ENCODE measurements at regions of chr20 and their contacts with region 1.

Region 1: GRCh38 chr20:24917797-24918578 is 31.1 kb upstream of the CST7 start:
- DNase-seq: peak; percentile 53
- ATAC-seq: peak; percentile 94
- H3K4me3 ChIP-seq: no peak overlapping the region
- H3K27ac ChIP-seq: no peak overlapping the region
- H3K4me1 ChIP-seq: peaks cover 15% of the 10 kb centered on the region; the same call in 1 of the 2 replicates
- H3K27me3 ChIP-seq: peaks cover 6 to 35% of the 10 kb centered on the region in 2 experiments; a peak in 4 of 5 replicates
- CTCF ChIP-seq: peak; percentile 96
- EP300 ChIP-seq: no peak
- POLR2A ChIP-seq: no peak
- RAD21 ChIP-seq: peak; percentile 95

Region 2: GRCh38 chr20:23937303-23938117 is 980.5 kb before region 1 on chr20:
- CTCF ChIA-PET with region 1: interaction called, 5 read pairs
- POLR2A ChIA-PET with region 1: no interaction called
- in situ Hi-C with region 1: loop called (anchors 25 kb)
- intact Hi-C with region 1: no loop called
- DNase-seq: peak; percentile 52
- ATAC-seq: peak; percentile 100
- H3K4me3 ChIP-seq: no peak overlapping the region
- H3K27ac ChIP-seq: no peak overlapping the region
- H3K4me1 ChIP-seq: no peaks in the 10 kb centered on the region
- H3K27me3 ChIP-seq: no peaks in the 10 kb centered on the region
- CTCF ChIP-seq: peak; percentile 95
- EP300 ChIP-seq: no peak
- POLR2A ChIP-seq: no peak
- RAD21 ChIP-seq: peak; percentile 95

Region 3: DNA sequence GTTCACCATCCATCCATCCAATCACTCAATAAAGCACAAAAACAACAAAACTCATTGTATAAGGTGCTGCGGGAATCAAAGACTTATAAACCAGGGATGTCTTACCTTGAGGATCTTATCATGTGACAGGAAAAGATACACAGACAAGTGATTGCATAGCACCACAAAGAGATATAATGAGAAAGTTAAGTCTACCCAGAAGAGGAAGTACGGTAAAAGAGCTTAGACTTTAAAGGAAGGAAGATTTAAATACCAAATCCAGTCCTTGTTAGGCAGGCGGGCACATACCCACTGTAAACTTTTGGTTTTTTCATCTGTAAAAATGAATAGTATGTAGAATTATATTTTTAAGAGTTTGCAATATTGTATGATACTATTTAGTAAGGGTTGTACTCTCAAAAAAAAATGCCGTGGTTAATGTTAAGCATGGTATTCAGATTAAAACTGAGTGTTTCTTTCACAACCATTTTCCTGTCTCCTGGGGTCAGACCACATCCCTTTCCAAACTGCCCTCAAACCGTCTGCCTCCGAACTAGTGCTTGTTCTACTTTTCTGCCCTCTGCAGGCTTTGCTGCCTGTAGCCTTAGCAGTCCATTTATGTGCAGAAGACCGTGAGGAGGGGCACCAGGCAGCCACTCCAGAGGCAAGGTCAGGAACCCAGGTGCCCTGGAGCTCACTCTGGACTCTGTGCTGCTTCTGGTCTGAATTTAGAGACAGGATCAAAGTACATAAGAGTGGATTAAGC is 628.1 kb before region 1 on chr20:
- CTCF ChIA-PET with region 1: no interaction called
- POLR2A ChIA-PET with region 1: no interaction called
- in situ Hi-C with region 1: loop called (anchors 25 kb)
- intact Hi-C with region 1: no loop called
- DNase-seq: no peak
- ATAC-seq: peak; percentile 39; the same call in 2 of the 3 replicates
- H3K4me3 ChIP-seq: no peak overlapping the region
- H3K27ac ChIP-seq: no peak overlapping the region
- H3K4me1 ChIP-seq: no peaks in the 10 kb centered on the region
- H3K27me3 ChIP-seq: no peaks in the 10 kb centered on the region
- CTCF ChIP-seq: no peak
- EP300 ChIP-seq: no peak
- POLR2A ChIP-seq: no peak
- RAD21 ChIP-seq: no peak

Region 4: DNA sequence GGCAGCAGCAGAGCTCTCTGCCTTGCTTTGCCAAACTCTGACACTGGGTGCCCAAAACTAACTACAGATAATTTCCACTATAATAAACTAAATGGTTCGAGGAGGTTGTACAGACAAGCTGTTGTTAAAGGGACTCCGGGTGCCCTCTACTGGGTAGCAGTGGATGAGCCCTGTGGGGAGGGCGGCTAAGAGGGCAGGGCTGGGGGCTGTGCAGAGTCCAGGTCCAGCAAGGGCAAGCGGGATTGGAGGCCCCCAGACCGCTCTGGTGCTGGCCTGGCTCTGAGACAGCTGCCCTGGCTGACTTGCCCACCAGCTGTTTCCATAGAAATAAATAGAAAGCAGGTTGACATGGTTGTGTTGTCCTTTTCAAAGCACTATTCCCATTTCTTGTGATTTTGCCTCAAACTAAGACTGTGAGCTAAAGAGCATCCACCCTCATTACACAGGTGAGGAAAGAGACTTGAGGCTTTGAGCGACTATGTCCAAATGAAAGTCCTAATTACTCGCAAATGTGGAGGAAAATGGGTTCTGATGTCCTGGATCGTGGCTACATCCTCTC is 136.5 kb before region 1 on chr20:
- CTCF ChIA-PET with region 1: interaction called, 7 read pairs
- POLR2A ChIA-PET with region 1: no interaction called
- in situ Hi-C with region 1: loop called (anchors 5 kb)
- intact Hi-C with region 1: loop called (anchors 1 kb)
- DNase-seq: peak; percentile 39
- ATAC-seq: peak; percentile 91
- H3K4me3 ChIP-seq: no peak overlapping the region
- H3K27ac ChIP-seq: no peak overlapping the region
- H3K4me1 ChIP-seq: no peaks in the 10 kb centered on the region
- H3K27me3 ChIP-seq: peaks cover 0 to 3% of the 10 kb centered on the region in 2 experiments; a peak in 2 of 5 replicates
- CTCF ChIP-seq: peak; percentile 74
- EP300 ChIP-seq: no peak
- POLR2A ChIP-seq: no peak
- RAD21 ChIP-seq: peak; percentile 50; the same call in 1 of the 2 replicates